Activated naive CD8-positive, alpha-beta T cell treated with anti-CD3 and anti-CD28 coated beads, Interleukin-2, amount 10 ng/mL, durations not matched to agents 7 days and 5 days (primary cell): ENCODE measurements at regions of chr19 and their contacts with region 1.

Region 1: GRCh38 chr19:1875646-1876495 is 9.4 kb downstream of the ABHD17A start:
- DNase-seq: peak; percentile 97
- ATAC-seq: peak; percentile 84
- H3K4me3 Mint-ChIP-seq: peak overlapping the region; percentile 99
- H3K27ac Mint-ChIP-seq: peak overlapping the region; percentile 99
- H3K4me1 Mint-ChIP-seq: peaks cover 18% of the 10 kb centered on the region
- H3K27me3 Mint-ChIP-seq: no peaks in the 10 kb centered on the region

Region 2: GRCh38 chr19:1855040-1855827 is 20.6 kb before region 1 on chr19:
- POLR2A ChIA-PET with region 1: interaction called, 11 read pairs
- DNase-seq: peak; percentile 91
- ATAC-seq: peak; percentile 79
- H3K4me3 Mint-ChIP-seq: peak overlapping the region; percentile 87
- H3K27ac Mint-ChIP-seq: peak overlapping the region; percentile 96
- H3K4me1 Mint-ChIP-seq: peaks cover 24% of the 10 kb centered on the region
- H3K27me3 Mint-ChIP-seq: no peaks in the 10 kb centered on the region

Region 3: DNA sequence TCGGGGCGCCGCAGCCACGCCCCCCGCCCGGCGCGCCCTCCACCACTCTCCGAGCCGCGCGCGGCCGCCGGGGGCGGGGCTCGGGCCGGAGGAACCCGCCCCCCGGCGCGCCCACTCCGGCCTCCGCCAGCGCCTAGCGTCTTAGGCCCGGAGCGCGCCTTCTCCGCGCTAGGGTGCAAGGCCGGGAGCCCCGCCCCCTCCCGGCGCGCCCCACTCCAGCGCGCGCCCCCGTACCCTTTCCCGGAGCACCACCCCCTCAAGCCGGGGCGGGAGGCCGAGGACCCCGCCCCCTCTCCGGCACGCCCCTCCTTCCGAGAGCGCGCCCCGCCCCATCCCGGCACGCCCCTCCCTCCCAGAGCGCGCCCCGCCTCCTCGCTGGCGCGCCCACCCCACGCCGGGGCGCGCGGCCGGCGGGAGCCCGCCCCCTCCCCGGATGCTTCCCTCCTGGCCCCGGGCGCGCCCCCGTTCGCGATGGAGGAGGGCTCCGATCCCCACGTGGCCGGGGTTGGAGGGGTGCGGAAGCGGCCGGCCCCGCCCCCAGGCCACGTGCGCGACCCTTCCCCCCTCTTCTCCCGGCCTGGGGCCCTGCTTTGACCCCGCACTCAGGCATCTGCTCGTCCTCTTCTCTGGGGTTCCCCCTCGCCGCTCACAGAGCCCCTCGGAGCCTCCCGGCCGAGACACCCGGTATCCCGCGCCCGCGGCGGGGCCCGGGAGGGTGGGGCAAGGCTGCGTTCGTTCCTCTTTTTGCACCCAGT is 12.0 kb before region 1 on chr19:
- POLR2A ChIA-PET with region 1: interaction called, 13 read pairs
- DNase-seq: peak; percentile 97
- ATAC-seq: peak; percentile 73
- H3K4me3 Mint-ChIP-seq: peak overlapping the region; percentile 82
- H3K27ac Mint-ChIP-seq: peak overlapping the region; percentile 82
- H3K4me1 Mint-ChIP-seq: peaks cover 18% of the 10 kb centered on the region
- H3K27me3 Mint-ChIP-seq: no peaks in the 10 kb centered on the region